CD4-positive, alpha-beta memory T cell (primary cell): ENCODE measurements at regions of chr3 and their contacts with region 1.

Region 1: DNA sequence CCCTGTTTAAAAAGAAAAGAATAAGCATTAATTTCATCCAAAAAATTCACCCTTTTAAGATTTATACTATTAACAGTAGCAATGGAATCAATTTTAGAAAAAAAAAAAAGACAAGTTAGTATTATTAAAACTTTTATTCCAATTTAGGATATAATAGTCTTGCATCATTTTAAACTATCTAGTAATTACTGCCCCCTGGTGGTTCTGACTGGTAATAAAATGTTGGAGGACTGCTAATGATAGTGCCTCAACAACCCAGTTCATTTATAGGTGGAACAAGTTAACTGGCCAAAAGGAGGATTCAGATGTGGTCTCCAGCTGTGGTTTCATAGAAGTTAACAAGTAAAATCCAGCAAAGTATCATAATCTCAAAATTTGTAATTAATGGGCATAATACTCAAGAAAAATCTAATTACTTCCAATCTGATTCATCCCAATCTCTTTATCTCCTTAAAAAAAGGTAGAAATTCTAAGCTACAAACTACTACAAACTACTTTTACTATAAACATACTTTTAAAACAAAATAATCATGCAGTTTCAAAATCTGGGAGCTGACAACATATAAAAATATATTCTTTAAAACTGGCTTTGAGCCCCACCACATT is 30.7 kb upstream of the WDR49 start:
- DNase-seq: peak; percentile 52 to 69 (median 59)
- H3K4me3 ChIP-seq: no peak overlapping the region
- H3K4me3 Mint-ChIP-seq: no peak overlapping the region
- H3K27ac ChIP-seq: no peak overlapping the region
- H3K27ac Mint-ChIP-seq: peak overlapping the region in 3 of 7 donors; percentile 1 to 19 (median 10)
- H3K4me1 ChIP-seq: no peaks in the 10 kb centered on the region
- H3K4me1 Mint-ChIP-seq: peaks cover 0 to 5% (median under 1%) of the 10 kb centered on the region in 4 donors
- H3K27me3 ChIP-seq: no peaks in the 10 kb centered on the region
- H3K27me3 Mint-ChIP-seq: no peaks in the 10 kb centered on the region

Region 2: DNA sequence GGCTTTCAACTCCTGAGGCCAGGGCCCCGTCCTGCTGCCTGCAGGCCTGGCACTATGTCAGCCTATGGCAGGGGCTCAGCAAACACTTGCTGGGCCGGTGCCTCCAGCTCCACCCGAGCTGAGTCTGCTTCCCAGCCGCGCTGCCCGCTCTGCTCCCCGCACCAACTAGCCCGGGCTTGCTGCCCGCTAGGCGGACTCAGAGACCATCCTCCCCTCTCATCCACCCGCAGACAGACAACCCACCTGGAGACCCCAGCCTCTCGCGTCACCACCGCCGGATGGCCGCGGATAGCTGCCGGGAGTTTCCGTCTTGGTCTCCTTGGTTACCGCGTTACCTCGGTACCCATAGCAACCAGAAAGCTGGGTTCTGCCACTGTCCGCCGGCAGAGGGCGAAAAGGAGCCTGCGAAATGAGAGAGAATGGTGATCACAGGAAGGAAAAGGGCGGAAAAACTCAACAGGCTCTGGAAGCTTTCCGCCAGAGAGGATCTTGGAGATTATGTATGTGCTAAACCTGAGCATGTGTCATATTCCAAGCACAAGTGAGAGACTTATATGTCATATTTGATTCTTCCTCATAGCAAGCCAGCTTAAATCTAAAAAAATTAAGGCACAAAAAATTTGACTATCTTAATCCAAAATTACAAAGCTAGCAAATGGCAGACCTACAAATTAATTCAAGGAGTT is 304.3 kb before region 1 on chr3 and contains the start of gene ZBBX:
- CTCF ChIA-PET with region 1: interaction called, 16 read pairs
- POLR2A ChIA-PET with region 1: no interaction called
- intact Hi-C with region 1: loop called (anchors 1 kb)
- DNase-seq: peak; percentile 78 to 82 (median 81)
- H3K4me3 ChIP-seq: no peak within 1 kb of the TSS
- H3K4me3 Mint-ChIP-seq: peak within 1 kb of the TSS; percentile 70 to 85 (median 80)
- H3K27ac ChIP-seq: no peak within 1 kb of the TSS
- H3K27ac Mint-ChIP-seq: peak within 1 kb of the TSS in 6 of 7 donors; percentile 67 to 92 (median 85)
- H3K4me1 ChIP-seq: peaks cover 3% of the 10 kb centered on the region
- H3K4me1 Mint-ChIP-seq: peaks cover 5 to 15% (median 7%) of the 10 kb centered on the region in 4 donors
- H3K27me3 ChIP-seq: no peaks in the 10 kb centered on the region
- H3K27me3 Mint-ChIP-seq: peaks cover 2 to 7% of the 10 kb centered on the region in 2 donors
- total RNA-seq, gene ZBBX: not detected

Region 3: DNA sequence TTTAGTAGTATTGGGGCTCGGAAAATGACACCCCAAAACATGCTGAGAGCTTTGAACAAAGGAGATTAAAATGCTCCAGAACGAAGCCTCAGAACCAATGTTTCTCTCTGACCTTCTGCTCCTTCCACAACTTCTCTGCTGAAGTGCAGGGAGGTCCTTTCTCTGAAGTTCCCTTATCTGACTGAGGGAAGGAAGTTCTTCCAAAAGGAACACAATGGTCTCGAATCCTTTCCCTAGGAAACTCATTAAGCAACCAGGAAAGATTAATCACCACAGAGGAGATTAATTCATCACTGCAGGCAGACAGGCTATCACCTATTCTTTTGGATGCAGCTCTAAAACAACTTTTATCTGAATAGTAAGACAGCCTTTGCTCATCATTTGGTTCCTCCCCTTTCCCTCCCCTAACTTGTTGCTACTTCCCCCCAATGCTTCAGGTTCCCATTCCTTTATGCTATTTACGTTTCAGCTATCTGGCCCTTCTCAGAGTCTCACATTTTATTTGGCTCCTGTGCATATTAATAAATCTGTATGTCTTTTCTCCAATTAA is 12.5 kb before region 1 on chr3:
- CTCF ChIA-PET with region 1: interaction called, 28 read pairs
- POLR2A ChIA-PET with region 1: no interaction called
- intact Hi-C with region 1: no loop called
- DNase-seq: no peak
- H3K4me3 ChIP-seq: no peak overlapping the region
- H3K4me3 Mint-ChIP-seq: no peak overlapping the region
- H3K27ac ChIP-seq: no peak overlapping the region
- H3K27ac Mint-ChIP-seq: peak overlapping the region in 1 of 7 donors; percentile 32
- H3K4me1 ChIP-seq: no peaks in the 10 kb centered on the region
- H3K4me1 Mint-ChIP-seq: no peaks in the 10 kb centered on the region
- H3K27me3 ChIP-seq: no peaks in the 10 kb centered on the region
- H3K27me3 Mint-ChIP-seq: no peaks in the 10 kb centered on the region

Region 4: GRCh38 chr3:167700046-167700445 is 15.6 kb after region 1 on chr3:
- CTCF ChIA-PET with region 1: interaction called, 23 read pairs
- POLR2A ChIA-PET with region 1: no interaction called
- intact Hi-C with region 1: no loop called
- DNase-seq: no peak
- H3K4me3 ChIP-seq: no peak overlapping the region
- H3K4me3 Mint-ChIP-seq: no peak overlapping the region
- H3K27ac ChIP-seq: no peak overlapping the region
- H3K27ac Mint-ChIP-seq: peak overlapping the region in 1 of 7 donors; percentile 84
- H3K4me1 ChIP-seq: no peaks in the 10 kb centered on the region
- H3K4me1 Mint-ChIP-seq: peaks cover 13 to 20% (median 16%) of the 10 kb centered on the region in 4 donors
- H3K27me3 ChIP-seq: no peaks in the 10 kb centered on the region
- H3K27me3 Mint-ChIP-seq: no peaks in the 10 kb centered on the region

Region 5: GRCh38 chr3:167705840-167706239 is 21.3 kb after region 1 on chr3:
- CTCF ChIA-PET with region 1: interaction called, 23 read pairs
- POLR2A ChIA-PET with region 1: no interaction called
- intact Hi-C with region 1: no loop called
- DNase-seq: no peak
- H3K4me3 ChIP-seq: no peak overlapping the region
- H3K4me3 Mint-ChIP-seq: no peak overlapping the region
- H3K27ac ChIP-seq: no peak overlapping the region
- H3K27ac Mint-ChIP-seq: peak overlapping the region in 2 of 7 donors; percentile 1 to 69
- H3K4me1 ChIP-seq: peaks cover 11% of the 10 kb centered on the region
- H3K4me1 Mint-ChIP-seq: peaks cover 23 to 44% (median 41%) of the 10 kb centered on the region in 4 donors
- H3K27me3 ChIP-seq: no peaks in the 10 kb centered on the region
- H3K27me3 Mint-ChIP-seq: no peaks in the 10 kb centered on the region

Region 6: DNA sequence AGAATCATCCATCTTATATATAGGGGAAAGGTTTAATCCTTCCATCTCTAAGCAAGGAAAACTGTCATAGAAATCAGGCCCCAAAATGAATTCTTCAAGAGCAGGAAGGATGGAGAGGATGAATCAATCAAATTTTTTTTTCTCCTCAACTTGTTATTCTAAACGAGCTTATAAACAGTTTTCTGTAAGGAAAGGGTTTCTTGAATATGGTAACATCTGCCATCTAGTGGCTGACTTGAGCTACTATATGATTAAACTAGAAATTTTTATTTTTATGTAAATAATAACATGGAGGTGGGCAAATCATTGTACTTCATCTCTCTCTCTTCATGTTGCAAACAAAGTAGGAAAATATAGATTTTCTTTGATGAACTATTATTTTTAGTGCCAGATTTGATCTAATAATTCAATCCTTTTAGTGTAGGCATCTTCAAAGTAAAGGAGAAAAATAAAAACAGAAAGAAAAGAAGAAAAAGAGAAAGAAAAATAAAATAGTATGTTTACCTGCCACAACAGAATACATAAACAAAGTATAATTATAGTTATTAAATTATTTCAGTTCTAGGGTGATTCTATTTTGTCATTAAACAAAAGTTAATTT is 197.7 kb after region 1 on chr3:
- CTCF ChIA-PET with region 1: interaction called, 6 read pairs
- POLR2A ChIA-PET with region 1: no interaction called
- intact Hi-C with region 1: loop called (anchors 1 kb)
- DNase-seq: peak in 4 of 5 donors; percentile 24 to 47 (median 34)
- H3K4me3 ChIP-seq: no peak overlapping the region
- H3K4me3 Mint-ChIP-seq: peak overlapping the region in 2 of 8 donors; percentile 8 to 40
- H3K27ac ChIP-seq: no peak overlapping the region
- H3K27ac Mint-ChIP-seq: no peak overlapping the region
- H3K4me1 ChIP-seq: peaks cover 3% of the 10 kb centered on the region
- H3K4me1 Mint-ChIP-seq: peaks cover 0 to 4% (median 2%) of the 10 kb centered on the region in 4 donors
- H3K27me3 ChIP-seq: no peaks in the 10 kb centered on the region
- H3K27me3 Mint-ChIP-seq: peaks cover 5 to 8% of the 10 kb centered on the region in 2 donors

Region 7: DNA sequence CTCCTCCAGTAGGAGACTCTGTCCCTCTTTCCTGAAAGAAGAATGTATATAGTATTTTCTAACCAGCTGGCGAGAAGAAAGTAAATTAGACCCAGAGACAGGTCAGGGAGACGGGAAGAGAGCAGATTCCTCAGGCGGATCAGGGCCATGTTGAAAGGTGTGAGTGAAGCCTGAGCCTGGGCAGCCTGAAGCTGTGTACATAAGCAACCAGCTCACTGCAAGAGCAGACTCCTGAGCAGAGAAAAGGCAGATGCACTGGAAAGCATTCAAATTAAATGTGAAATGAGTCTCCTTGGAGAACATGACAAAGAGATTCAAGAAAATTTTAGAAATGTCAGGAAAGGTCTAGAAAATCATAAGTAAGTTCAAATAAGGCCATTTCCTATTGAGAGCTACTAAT is 245.5 kb after region 1 on chr3:
- CTCF ChIA-PET with region 1: no interaction called
- POLR2A ChIA-PET with region 1: no interaction called
- intact Hi-C with region 1: no loop called
- DNase-seq: no peak
- H3K4me3 ChIP-seq: no peak overlapping the region
- H3K4me3 Mint-ChIP-seq: no peak overlapping the region
- H3K27ac ChIP-seq: no peak overlapping the region
- H3K27ac Mint-ChIP-seq: peak overlapping the region in 1 of 7 donors; percentile 47
- H3K4me1 ChIP-seq: no peaks in the 10 kb centered on the region
- H3K4me1 Mint-ChIP-seq: no peaks in the 10 kb centered on the region
- H3K27me3 ChIP-seq: no peaks in the 10 kb centered on the region
- H3K27me3 Mint-ChIP-seq: peaks cover 0 to 1% of the 10 kb centered on the region in 2 donors

Region 8: DNA sequence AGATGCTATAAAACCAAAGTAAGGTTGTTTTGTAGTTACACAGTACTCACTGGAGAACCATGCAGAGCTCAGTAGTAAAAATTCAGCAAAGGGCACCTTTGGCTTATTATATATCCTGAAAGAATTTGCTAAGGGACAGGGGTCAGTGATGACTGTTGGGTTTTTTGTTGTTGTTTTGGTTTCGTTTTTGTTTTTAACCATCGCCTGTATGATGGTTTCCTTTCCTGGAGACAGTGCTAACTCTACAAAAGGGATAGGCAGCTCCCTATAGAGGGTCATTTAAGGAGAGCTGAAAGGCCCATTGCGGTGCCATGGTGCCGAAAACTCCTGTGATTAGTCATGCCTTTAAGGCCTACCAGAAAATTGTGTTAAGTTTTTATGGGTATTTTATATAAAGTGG is 529.4 kb after region 1 on chr3:
- CTCF ChIA-PET with region 1: no interaction called
- POLR2A ChIA-PET with region 1: no interaction called
- intact Hi-C with region 1: no loop called
- DNase-seq: no peak
- H3K4me3 ChIP-seq: peak overlapping the region in 1 of 2 donors; percentile 22
- H3K4me3 Mint-ChIP-seq: peak overlapping the region; percentile 42 to 71 (median 61)
- H3K27ac ChIP-seq: no peak overlapping the region
- H3K27ac Mint-ChIP-seq: peak overlapping the region in 2 of 7 donors; percentile 61 to 64
- H3K4me1 ChIP-seq: peaks cover 15% of the 10 kb centered on the region
- H3K4me1 Mint-ChIP-seq: peaks cover 9 to 11% (median 10%) of the 10 kb centered on the region in 4 donors
- H3K27me3 ChIP-seq: no peaks in the 10 kb centered on the region
- H3K27me3 Mint-ChIP-seq: no peaks in the 10 kb centered on the region

Region 9: DNA sequence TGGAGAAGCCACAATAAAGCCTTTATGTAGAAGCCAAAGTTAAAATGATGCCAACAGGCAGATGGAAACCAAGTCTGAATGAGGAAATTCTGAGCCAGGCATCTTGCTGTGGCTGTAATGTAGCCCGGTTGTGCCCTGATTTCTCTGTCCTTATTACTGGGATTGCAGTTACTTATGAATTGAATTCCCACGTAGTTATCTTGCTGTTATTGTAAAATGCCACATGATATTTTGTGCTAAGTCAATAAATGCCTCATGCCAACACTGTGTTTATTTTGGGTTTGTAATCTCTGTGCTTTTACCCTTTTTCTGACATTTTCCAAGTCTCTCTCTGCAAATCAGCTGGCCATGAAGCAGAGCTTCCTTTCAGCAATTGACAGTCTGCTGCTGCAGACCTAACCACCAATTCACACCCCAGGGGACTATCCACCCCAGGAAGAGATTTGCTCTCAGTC is 897.3 kb after region 1 on chr3:
- CTCF ChIA-PET with region 1: no interaction called
- POLR2A ChIA-PET with region 1: no interaction called
- intact Hi-C with region 1: no loop called
- DNase-seq: no peak
- H3K4me3 ChIP-seq: no peak overlapping the region
- H3K4me3 Mint-ChIP-seq: no peak overlapping the region
- H3K27ac ChIP-seq: no peak overlapping the region
- H3K27ac Mint-ChIP-seq: no peak overlapping the region
- H3K4me1 ChIP-seq: no peaks in the 10 kb centered on the region
- H3K4me1 Mint-ChIP-seq: no peaks in the 10 kb centered on the region
- H3K27me3 ChIP-seq: no peaks in the 10 kb centered on the region
- H3K27me3 Mint-ChIP-seq: no peaks in the 10 kb centered on the region

Region 10: GRCh38 chr3:169103951-169104941 is 1419.8 kb after region 1 on chr3:
- CTCF ChIA-PET with region 1: no interaction called
- POLR2A ChIA-PET with region 1: no interaction called
- intact Hi-C with region 1: no loop called
- DNase-seq: no peak
- H3K4me3 ChIP-seq: no peak overlapping the region
- H3K4me3 Mint-ChIP-seq: no peak overlapping the region
- H3K27ac ChIP-seq: no peak overlapping the region
- H3K27ac Mint-ChIP-seq: no peak overlapping the region
- H3K4me1 ChIP-seq: no peaks in the 10 kb centered on the region
- H3K4me1 Mint-ChIP-seq: no peaks in the 10 kb centered on the region
- H3K27me3 ChIP-seq: no peaks in the 10 kb centered on the region
- H3K27me3 Mint-ChIP-seq: no peaks in the 10 kb centered on the region